Activated B cell treated with CpG ODN at 0.5 μM for 24 hours (primary cell): ENCODE measurements at regions of chr11 and their contacts with region 1.

Region 1: GRCh38 chr11:128879817-128880216 is 11.3 kb upstream of the KCNJ5 start:
- DNase-seq: no peak
- ATAC-seq: no peak
- H3K4me3 Mint-ChIP-seq: no peak overlapping the region
- H3K27ac Mint-ChIP-seq: no peak overlapping the region
- H3K4me1 Mint-ChIP-seq: no peaks in the 10 kb centered on the region
- H3K27me3 Mint-ChIP-seq: peaks cover 56% of the 10 kb centered on the region
- CTCF ChIP-seq: no peak

Region 2: GRCh38 chr11:128956401-128957201 is 76.8 kb after region 1 on chr11:
- CTCF ChIA-PET with region 1: interaction called, 172 read pairs
- POLR2A ChIA-PET with region 1: interaction called, 4 read pairs
- intact Hi-C with region 1: loop called (anchors 1 kb)
- DNase-seq: no peak
- ATAC-seq: peak; percentile 49
- H3K4me3 Mint-ChIP-seq: no peak overlapping the region
- H3K27ac Mint-ChIP-seq: no peak overlapping the region
- H3K4me1 Mint-ChIP-seq: peaks cover 2% of the 10 kb centered on the region
- H3K27me3 Mint-ChIP-seq: peaks cover 14% of the 10 kb centered on the region
- CTCF ChIP-seq: peak; percentile 31